ENCODE measurements at regions of chrX and their contacts with region 1.

Region 1: GRCh38 chrX:86133761-86134160 is 14.5 kb upstream of the DACH2 start:
- DNase-seq: no peak
- H3K4me3 ChIP-seq: no peak overlapping the region
- H3K27ac ChIP-seq: no peak overlapping the region
- H3K4me1 ChIP-seq: no peaks in the 10 kb centered on the region
- H3K27me3 ChIP-seq: no peaks in the 10 kb centered on the region
- CTCF ChIP-seq: peak; percentile 59

Region 2: DNA sequence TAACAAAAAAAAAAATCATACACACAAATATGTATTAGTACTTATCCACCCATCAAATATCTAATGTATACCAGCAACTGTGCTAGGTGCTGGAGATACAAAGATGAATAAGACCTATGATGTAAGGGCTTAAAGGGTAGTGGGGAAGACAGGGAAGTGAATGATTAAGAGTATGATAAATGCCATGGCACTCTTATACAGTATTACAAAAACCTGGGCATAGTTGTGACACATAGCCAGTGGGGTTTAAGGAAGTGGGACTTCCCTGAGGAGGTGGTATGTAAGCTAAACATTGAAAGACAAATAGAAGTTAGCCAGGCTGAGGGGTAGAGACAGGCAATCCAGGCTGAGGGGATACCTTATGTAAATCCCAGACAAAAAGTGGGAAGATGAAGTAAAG is 110.0 kb before region 1 on chrX:
- CTCF ChIA-PET with region 1: no interaction called
- POLR2A ChIA-PET with region 1: no interaction called
- intact Hi-C with region 1: no loop called
- DNase-seq: no peak
- H3K4me3 ChIP-seq: no peak overlapping the region
- H3K27ac ChIP-seq: no peak overlapping the region
- H3K4me1 ChIP-seq: no peaks in the 10 kb centered on the region
- H3K27me3 ChIP-seq: no peaks in the 10 kb centered on the region
- CTCF ChIP-seq: no peak

Region 3: DNA sequence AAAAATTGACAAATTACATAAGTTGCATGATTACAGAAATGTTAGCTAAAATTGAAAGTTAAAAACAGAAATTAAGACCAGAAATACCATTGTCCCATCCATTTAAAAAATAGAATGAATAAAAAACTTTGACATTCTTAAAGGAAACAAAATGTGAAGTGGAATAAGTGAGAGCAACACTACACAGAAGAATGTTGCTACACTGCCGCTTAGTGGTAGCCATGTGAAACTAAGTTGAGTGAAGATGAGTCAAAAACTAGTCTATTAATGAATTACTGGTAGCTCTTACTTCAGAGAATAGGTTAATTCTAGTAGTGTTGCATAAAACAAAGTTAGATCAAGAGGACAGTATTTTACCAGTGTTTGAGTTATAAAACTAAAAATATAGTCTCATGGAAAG is 812.8 kb after region 1 on chrX:
- CTCF ChIA-PET with region 1: no interaction called
- POLR2A ChIA-PET with region 1: no interaction called
- intact Hi-C with region 1: loop called (anchors 10 kb)
- DNase-seq: peak in 1 of 2 experiments; percentile 0
- H3K4me3 ChIP-seq: no peak overlapping the region
- H3K27ac ChIP-seq: no peak overlapping the region
- H3K4me1 ChIP-seq: no peaks in the 10 kb centered on the region
- H3K27me3 ChIP-seq: no peaks in the 10 kb centered on the region
- CTCF ChIP-seq: peak; percentile 66

Measured in PC-9 (cell line).